ENCODE measurements at regions of chr17 and their contacts with region 1.

Region 1: GRCh38 chr17:979538-980405 is at the start of gene NXN:
- DNase-seq: peak; percentile 84 to 98 (median 89)
- ATAC-seq: peak; percentile 93
- H3K4me3 ChIP-seq: peak within 1 kb of the TSS; percentile 60 to 61
- H3K27ac ChIP-seq: peak within 1 kb of the TSS; percentile 74 to 76
- H3K4me1 ChIP-seq: peaks cover 3 to 42% of the 10 kb centered on the region in 2 donors
- H3K27me3 ChIP-seq: peaks cover 0 to 26% of the 10 kb centered on the region in 2 donors
- CTCF ChIP-seq: no peak
- polyA plus RNA-seq, gene NXN: 50.3 to 59.1 (median 55.1) TPM

Region 2: GRCh38 chr17:794876-795275 is 184.9 kb before region 1 on chr17:
- intact Hi-C with region 1: loop called in 1 of 2 experiments (anchors 5 kb)
- DNase-seq: peak; percentile 73 to 91 (median 85)
- ATAC-seq: peak; percentile 89
- H3K4me3 ChIP-seq: no peak overlapping the region
- H3K27ac ChIP-seq: peak overlapping the region in 1 of 2 donors; percentile 18
- H3K4me1 ChIP-seq: peaks cover 7 to 13% of the 10 kb centered on the region in 2 donors
- H3K27me3 ChIP-seq: no peaks in the 10 kb centered on the region
- CTCF ChIP-seq: peak; percentile 68 to 78

Region 3: DNA sequence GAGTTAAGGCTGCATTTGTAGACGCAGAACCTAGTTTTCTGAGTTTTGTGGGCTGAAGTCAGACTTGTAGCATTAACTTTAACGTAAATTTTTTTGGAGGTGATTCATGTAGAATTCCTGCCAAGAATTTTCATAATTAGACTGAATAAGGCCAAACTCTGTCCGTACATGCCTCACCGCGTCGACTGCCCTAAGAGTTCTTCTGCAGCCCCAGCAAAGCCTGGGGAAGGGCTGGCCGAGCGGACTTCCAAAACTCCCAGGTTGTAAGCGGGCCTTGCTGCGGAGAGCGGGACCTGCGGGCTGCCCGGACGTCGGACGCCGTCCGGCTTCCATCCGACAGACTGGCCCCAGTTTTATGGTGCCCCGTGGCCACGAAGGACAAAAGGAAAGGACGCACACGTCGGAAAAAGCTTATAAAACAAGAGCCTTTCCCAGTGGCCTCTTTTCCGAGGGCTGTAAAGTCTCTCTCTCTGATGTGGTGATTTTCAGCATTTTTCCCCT is 75.7 kb before region 1 on chr17:
- intact Hi-C with region 1: loop called in 1 of 2 experiments (anchors 10 kb)
- DNase-seq: peak in 1 of 4 donors; percentile 31
- ATAC-seq: peak; percentile 21
- H3K4me3 ChIP-seq: no peak overlapping the region
- H3K27ac ChIP-seq: peak overlapping the region in 1 of 2 donors; percentile 19
- H3K4me1 ChIP-seq: peaks cover 15 to 19% of the 10 kb centered on the region in 2 donors
- H3K27me3 ChIP-seq: peaks cover 0 to 17% of the 10 kb centered on the region in 2 donors
- CTCF ChIP-seq: no peak

Region 4: DNA sequence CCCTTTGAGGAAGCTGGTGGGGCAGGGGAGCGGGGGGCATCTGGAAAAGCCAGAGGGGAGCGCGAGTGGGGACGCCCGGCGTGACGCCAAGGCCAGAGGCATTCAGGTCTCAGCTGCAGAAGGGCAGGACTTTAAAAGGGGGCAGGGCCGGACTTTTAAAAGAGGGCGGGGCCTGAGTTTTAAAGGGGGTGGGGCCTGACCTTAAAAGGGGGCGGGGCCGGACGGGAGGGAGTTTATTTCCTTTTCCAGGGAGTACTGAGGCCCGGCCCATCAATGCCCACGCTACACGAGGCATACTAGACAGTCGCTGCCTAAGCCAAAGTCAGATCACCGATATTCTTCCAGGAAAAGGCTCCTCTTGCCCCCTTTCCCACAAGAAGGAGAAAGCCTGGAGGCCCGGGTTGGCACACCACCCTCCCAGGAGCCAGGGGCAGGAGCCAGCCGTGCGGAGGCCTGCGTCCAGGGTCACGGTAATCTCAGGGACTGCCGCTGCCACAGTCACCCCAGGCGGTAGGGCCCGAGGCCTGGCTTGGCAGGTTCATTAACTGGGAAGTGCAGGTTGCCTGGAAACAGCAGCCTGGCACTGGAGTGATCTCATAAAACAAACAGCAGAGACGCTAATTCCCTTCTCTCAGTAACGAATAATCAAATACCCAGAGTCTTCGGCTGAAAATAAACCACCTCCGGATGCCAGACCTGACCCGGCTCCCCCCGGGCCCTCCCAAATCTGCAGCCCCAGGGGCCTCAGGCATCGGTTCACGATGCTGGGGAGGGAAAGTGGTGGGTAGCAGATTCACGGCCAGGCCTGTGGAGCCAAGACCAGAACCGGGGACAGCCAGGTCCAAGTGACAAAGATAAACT is 107.8 kb after region 1 on chr17:
- intact Hi-C with region 1: no loop called
- DNase-seq: peak in 3 of 4 donors; percentile 75 to 87 (median 77)
- ATAC-seq: peak; percentile 80
- H3K4me3 ChIP-seq: no peak overlapping the region
- H3K27ac ChIP-seq: peak overlapping the region; percentile 75 to 83
- H3K4me1 ChIP-seq: peaks cover 7 to 70% of the 10 kb centered on the region in 2 donors
- H3K27me3 ChIP-seq: no peaks in the 10 kb centered on the region
- CTCF ChIP-seq: no peak